ENCODE measurements at regions of chr17 and their contacts with region 1.

Region 1: DNA sequence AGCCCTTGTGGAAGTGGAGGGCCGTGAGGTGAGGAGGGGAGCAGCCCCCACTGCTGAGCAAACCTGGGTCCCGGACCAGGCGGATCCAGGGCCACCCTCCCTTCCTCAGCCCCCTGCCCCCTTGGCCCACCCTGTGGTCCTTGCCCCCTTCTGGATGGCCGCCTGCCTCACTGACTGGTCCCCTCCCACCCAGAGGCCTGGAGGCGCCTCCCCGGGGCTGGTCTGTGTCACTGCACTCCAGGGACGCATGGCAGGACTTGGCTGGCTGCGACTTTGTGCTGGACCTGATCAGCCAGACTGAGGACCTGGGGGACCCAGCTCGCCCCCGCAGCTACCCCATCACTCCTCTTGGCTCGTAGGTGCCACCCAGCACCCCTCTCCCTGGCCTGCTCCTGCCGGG is 19.2 kb upstream of the SMIM5 start:
- DNase-seq: no peak
- H3K4me3 ChIP-seq: no peak overlapping the region
- H3K27ac ChIP-seq: no peak overlapping the region
- H3K4me1 ChIP-seq: no peaks in the 10 kb centered on the region
- H3K27me3 ChIP-seq: no peaks in the 10 kb centered on the region
- CTCF ChIP-seq: peak; percentile 33; the same call in 1 of the 2 replicates

Region 2: DNA sequence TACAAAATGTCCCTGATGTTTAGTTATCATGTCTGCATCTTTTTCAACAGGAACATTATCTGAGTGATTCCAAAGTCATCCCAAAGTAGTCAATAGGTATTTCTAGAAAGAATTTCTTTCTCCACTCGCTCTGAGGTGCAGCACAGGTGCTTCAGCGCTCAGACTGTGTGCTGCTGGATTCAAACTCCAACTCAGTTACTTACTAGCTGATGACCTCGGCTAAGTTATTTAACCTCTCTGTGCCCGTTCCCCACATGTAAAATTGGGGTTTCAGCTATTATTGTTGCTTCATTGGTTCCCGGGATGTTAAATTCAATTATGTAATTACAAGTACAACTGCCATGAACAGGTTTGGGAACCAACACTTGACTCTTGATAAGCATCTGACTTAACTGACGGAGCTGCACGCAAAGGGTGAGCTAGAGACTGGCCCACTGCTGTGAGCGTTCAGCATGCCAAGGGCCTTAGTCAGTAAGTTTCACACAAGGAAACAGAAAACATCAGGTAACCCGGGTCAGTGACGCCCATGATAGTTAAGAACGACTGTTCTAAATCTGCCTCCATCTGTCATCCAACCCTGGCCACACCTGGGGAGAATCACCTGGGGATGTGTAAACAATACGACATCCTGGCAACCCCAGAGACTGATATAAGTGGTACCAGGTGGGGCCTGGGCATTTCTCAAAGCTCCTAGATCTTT is 31.3 kb after region 1 on chr17:
- CTCF ChIA-PET with region 1: no interaction called
- POLR2A ChIA-PET with region 1: interaction called, 16 read pairs
- intact Hi-C with region 1: no loop called
- DNase-seq: no peak
- H3K4me3 ChIP-seq: no peak overlapping the region
- H3K27ac ChIP-seq: no peak overlapping the region
- H3K4me1 ChIP-seq: no peaks in the 10 kb centered on the region
- H3K27me3 ChIP-seq: no peaks in the 10 kb centered on the region
- CTCF ChIP-seq: no peak